SK-N-SH (cell line): ENCODE measurements at regions of chr20 and their contacts with region 1.

Region 1: DNA sequence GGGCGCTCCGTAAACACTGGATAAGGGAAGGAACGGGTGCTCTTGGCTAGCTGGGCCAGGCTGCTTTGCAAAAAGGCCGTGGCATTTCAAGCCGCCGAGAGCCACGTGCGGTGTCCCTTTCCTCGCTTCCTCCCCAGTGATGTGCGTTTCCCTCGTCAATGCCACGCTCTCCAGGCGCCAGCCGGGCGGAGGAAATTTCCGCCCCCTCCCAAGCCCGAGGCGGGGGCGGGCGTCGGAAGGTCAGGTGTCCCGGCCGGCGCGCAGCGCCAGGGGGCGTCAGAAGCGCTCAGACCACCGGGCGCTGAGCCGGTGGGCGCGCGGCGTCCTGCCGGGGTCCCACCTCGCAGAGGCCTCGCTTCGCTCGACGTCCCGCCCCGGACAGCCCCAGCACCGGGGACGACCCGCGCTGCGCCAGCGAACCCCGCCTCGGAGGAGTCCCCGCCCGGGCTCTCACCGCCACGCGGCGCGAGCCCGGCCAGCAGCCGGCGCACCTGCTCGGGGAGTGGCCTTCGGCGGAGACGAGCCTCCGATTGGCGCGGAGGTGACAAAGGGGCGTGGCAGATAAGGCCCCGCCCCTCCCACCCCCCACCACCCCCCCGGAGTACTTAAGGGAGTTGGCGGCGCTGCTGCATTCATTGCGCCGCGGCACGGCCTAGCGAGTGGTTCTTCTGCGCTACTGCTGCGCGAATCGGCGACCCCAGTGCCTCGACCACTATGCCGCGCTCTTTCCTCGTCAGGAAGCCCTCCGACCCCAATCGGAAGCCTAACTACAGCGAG is at the start of gene SNAI1:
- DNase-seq: peak; percentile 98
- H3K4me3 ChIP-seq: peak within 1 kb of the TSS; percentile 76 to 80
- H3K27ac ChIP-seq: peak within 1 kb of the TSS; percentile 43 to 76; a peak in 3 of 4 replicates
- H3K4me1 ChIP-seq: peaks cover 11 to 40% of the 10 kb centered on the region in 2 experiments; a peak in 3 of 4 replicates
- H3K27me3 ChIP-seq: no peaks in the 10 kb centered on the region
- CTCF ChIP-seq: peak; percentile 61
- EP300 ChIP-seq: no peak
- RAD21 ChIP-seq: peak; percentile 46
- polyA plus RNA-seq, gene SNAI1: 3.7 and 6.2 TPM in 2 replicates

Region 2: DNA sequence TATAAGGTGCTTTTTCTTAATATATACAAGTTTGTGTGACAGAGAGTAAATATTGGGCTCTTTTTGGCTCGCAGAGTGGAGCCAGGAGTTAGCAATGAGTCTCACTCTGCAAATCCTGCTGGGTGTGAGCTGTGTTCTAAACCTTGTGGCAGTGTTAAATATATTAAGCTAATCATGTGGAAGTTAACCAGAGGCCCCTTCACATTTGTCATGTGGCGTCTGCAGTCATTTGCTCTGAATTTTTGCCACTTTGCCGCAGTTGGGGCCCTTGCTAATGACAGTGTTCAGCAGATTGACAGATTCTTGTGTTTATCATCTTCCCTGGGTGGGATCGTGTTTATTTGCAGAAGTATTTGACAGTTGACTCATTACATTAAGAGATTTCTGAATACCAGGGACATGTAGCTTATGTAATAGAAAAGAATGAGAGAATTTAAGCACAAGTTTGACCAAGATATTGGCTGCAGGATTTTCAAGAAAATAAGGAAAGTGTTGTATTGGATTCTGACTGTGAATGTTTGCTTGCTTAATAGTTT is 105.1 kb before region 1 on chr20:
- CTCF ChIA-PET with region 1: no interaction called
- POLR2A ChIA-PET with region 1: no interaction called
- DNase-seq: no peak
- H3K4me3 ChIP-seq: no peak overlapping the region
- H3K27ac ChIP-seq: no peak overlapping the region
- H3K4me1 ChIP-seq: no peaks in the 10 kb centered on the region; a peak in 1 of 4 replicates
- H3K27me3 ChIP-seq: no peaks in the 10 kb centered on the region
- CTCF ChIP-seq: no peak
- EP300 ChIP-seq: no peak
- RAD21 ChIP-seq: no peak

Region 3: DNA sequence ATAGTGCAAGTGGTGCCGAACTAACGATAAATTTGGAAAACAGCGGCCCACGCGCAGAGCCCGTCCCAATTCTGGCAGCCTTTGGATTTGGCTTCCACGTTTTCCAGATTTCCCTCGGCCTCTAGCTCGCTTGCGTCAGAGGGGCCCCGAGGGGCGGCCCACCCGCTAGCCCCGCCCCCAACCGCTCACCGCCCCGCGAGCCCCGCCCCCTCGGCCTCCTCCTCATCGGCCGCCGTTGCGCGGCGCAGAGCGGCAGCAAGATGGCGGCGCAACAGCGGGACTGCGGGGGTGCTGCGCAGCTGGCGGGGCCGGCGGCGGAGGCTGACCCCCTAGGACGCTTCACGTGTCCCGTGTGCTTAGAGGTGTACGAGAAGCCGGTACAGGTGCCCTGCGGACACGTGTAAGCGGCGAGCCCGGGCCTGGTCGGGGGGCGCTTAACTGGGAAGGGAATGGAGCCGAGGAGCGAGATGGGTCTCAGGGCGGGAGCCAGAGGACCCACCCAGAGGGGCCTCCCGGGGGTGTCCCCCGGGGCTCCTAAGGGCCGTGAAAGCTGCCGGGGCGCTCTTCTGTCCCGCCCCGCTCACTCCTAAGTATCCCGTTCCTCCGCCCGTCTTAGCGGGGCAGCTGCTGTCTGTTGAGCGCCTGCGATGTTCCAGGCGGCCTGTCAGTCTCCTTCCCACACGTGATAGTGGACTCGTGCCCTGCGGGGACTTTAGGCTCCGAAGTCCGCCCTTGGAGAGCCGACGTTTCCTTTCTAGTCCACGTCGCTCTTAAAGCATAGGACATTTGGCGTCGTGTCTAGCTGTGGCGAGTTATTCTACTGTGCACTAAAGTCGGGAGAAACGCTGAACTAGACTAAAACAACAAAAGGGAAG is 46.1 kb before region 1 on chr20 and contains the start of gene RNF114:
- CTCF ChIA-PET with region 1: interaction called, 24 read pairs
- POLR2A ChIA-PET with region 1: no interaction called
- DNase-seq: peak; percentile 100
- H3K4me3 ChIP-seq: peak within 1 kb of the TSS; percentile 74 to 90
- H3K27ac ChIP-seq: peak within 1 kb of the TSS; percentile 59 to 66; a peak in 3 of 4 replicates
- H3K4me1 ChIP-seq: peaks cover 18 to 21% of the 10 kb centered on the region in 2 experiments; a peak in 3 of 4 replicates
- H3K27me3 ChIP-seq: no peaks in the 10 kb centered on the region
- CTCF ChIP-seq: no peak
- EP300 ChIP-seq: 0 out of 4 replicates have a peak, but pooled peaks of 1 of the 2 experiments have one; percentile 18
- RAD21 ChIP-seq: no peak
- polyA plus RNA-seq, gene RNF114: 30.2 and 55.0 TPM in 2 replicates

Region 4: DNA sequence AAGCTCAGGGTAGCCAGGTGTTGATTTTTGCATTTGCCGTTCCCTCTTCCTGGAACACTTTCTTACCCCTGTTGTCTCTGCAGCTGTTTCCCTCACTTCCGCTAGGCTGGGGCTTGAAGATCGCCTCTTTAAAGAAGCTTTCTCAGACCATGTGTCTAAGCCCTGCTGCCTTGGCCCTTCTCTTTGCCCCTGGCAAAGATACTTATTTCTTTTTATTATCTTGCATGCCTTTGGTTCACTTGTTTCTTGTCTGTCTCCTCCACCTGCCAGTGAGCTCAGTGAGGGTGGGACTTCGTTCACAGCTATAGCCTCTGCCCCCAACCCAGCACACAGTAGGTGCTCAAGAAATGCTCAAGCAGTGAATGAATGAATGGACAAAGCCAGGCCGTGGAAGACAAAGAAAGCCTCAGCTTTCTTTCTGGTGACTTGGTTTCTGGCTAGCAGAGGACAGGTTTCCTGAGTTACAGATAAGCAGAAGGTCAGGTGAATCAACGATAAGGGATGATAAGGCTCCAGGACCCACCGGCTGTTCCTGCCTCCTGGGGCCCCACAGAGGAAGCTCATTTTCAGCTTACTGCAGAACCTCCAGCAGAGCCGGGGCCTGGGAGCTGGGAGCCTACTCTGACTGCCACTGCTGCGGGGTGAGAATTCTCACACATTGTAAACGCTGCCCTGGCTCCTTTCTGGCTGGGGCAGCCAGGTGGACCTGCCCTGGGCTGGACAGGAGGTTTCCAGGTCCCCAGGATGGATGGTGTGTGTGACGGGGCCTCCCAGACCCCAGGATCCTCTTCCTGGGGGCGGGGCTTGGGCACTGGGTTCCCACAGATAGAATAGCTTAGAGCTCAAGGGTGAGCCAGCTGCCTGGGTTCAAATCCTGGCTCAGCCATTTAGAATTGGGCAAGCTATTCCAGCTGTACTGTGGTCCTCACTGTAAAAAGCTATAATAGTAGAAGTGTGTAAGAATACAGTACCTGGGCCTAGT is 30.0 kb after region 1 on chr20:
- CTCF ChIA-PET with region 1: interaction called, 31 read pairs
- POLR2A ChIA-PET with region 1: interaction called, 13 read pairs
- DNase-seq: peak; percentile 51
- H3K4me3 ChIP-seq: no peak overlapping the region
- H3K27ac ChIP-seq: no peak overlapping the region
- H3K4me1 ChIP-seq: peaks cover 0 to 31% of the 10 kb centered on the region in 2 experiments; a peak in 1 of 4 replicates
- H3K27me3 ChIP-seq: no peaks in the 10 kb centered on the region
- CTCF ChIP-seq: no peak
- EP300 ChIP-seq: no peak
- RAD21 ChIP-seq: no peak

Region 5: GRCh38 chr20:50048420-50049166 is 66.1 kb after region 1 on chr20:
- CTCF ChIA-PET with region 1: interaction called, 29 read pairs
- POLR2A ChIA-PET with region 1: interaction called, 5 read pairs
- DNase-seq: no peak
- H3K4me3 ChIP-seq: no peak overlapping the region
- H3K27ac ChIP-seq: peak overlapping the region; percentile 30 to 66; a peak in 3 of 4 replicates
- H3K4me1 ChIP-seq: peaks cover 14 to 32% of the 10 kb centered on the region in 2 experiments; a peak in 2 of 4 replicates
- H3K27me3 ChIP-seq: no peaks in the 10 kb centered on the region
- CTCF ChIP-seq: no peak
- EP300 ChIP-seq: no peak
- RAD21 ChIP-seq: no peak

Region 6: DNA sequence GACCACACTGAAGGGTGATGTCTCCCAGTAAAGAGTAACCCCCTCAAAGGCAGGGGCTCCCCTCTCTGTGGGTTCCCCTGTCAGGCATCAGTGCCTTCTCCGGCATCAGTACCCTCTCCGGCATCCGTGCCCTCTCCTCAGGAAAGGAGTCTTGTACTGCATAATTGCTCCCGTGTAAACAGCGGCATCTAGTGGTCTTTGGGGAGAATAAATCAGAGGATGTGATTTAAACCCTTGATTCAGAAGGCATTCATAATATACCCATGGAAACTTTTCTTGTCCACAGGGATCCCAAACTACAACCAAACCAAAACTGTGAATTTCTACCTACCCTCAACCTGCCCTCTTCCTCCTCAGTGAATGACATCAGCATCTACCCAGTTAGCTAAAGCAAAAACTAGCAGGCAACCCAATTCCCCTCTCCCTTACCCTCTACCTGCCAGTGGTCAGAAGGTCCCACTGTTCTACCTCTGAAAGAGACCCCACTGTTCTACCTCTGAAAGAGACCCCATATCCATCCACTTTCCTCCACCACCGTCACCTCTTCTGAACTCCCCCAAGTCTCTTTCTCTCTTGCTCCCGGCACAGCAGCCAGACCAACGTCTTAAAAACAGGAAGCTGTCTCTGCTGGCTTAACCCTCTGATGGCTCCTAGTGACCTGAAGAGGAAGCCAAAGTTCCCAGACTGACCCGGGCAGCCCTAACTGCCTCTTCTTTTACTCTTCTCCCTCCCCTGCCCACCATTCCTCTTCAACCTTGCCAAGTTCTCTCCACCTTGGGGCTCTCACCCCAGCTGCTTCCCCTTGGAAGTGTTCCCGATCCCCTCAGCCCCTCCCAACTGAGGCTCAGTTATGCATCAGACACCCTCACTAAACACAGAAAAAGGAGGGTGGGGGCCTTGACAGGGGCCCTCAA is 103.2 kb after region 1 on chr20:
- CTCF ChIA-PET with region 1: interaction called, 154 read pairs
- POLR2A ChIA-PET with region 1: interaction called, 3 read pairs
- DNase-seq: peak; percentile 79
- H3K4me3 ChIP-seq: no peak overlapping the region; a peak in 1 of 4 replicates
- H3K27ac ChIP-seq: peak overlapping the region; percentile 50 to 73
- H3K4me1 ChIP-seq: peaks cover 15 to 21% of the 10 kb centered on the region in 2 experiments
- H3K27me3 ChIP-seq: no peaks in the 10 kb centered on the region
- CTCF ChIP-seq: peak; percentile 88
- EP300 ChIP-seq: no peak
- RAD21 ChIP-seq: peak; percentile 80

Region 7: DNA sequence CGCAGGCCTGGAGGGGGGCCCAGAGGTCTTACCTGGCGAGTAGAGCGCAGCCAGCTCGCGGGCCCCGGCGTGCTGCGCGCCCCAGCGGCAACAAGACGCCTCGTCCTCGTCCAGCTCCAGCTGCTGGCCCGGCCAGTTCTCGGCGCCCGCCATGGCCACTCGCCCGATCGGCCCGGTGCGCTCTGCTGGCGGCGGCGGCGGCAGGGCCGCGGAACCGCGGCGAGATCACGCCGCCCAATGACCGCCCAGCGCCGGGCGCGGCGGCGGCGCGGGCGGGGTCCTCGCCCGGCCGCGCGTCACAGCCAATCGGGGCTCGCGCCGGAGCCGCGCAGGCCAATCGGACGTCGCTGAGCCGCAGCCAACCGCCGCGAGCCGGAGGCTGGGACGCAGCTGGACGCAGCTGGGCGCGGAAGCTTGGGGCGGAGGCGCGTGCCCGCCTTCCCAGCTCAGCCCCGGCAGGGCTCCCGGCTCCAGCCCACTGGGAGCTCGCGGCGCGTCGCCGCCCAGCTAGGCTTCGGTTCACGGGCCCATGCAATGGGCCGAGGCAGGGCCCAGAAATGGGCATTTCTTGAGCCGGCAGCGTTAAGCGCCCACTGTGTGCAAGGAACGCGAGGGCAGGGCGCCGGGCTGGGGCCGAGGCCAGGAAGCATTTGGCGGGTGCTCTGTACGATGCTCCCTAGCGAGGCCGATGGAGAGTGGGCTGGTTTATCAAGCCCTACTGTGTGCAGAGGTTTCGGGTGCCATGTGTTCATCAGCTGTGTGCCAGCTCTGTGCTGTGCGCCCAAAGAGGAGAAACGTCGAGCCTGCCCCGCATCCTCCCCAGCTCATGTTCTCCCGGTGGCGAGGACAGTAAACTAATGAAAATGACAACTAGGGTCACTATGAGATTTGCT is 171.2 kb after region 1 on chr20 and contains the start of gene PEDS1:
- CTCF ChIA-PET with region 1: interaction called, 11 read pairs
- POLR2A ChIA-PET with region 1: no interaction called
- DNase-seq: peak; percentile 99
- H3K4me3 ChIP-seq: peak within 1 kb of the TSS; percentile 78 to 97
- H3K27ac ChIP-seq: peak within 1 kb of the TSS; percentile 41 to 82; a peak in 3 of 4 replicates
- H3K4me1 ChIP-seq: peaks cover 3 to 32% of the 10 kb centered on the region in 2 experiments; a peak in 1 of 4 replicates
- H3K27me3 ChIP-seq: no peaks in the 10 kb centered on the region
- CTCF ChIP-seq: no peak
- EP300 ChIP-seq: peak in 1 of 2 experiments; percentile 23; a peak in 1 of 4 replicates
- RAD21 ChIP-seq: no peak; the same call in 1 of the 2 replicates
- polyA plus RNA-seq, gene PEDS1: 18.3 and 18.4 TPM in 2 replicates